ENCODE measurements at regions of chr11 and their contacts with region 1.

Region 1: DNA sequence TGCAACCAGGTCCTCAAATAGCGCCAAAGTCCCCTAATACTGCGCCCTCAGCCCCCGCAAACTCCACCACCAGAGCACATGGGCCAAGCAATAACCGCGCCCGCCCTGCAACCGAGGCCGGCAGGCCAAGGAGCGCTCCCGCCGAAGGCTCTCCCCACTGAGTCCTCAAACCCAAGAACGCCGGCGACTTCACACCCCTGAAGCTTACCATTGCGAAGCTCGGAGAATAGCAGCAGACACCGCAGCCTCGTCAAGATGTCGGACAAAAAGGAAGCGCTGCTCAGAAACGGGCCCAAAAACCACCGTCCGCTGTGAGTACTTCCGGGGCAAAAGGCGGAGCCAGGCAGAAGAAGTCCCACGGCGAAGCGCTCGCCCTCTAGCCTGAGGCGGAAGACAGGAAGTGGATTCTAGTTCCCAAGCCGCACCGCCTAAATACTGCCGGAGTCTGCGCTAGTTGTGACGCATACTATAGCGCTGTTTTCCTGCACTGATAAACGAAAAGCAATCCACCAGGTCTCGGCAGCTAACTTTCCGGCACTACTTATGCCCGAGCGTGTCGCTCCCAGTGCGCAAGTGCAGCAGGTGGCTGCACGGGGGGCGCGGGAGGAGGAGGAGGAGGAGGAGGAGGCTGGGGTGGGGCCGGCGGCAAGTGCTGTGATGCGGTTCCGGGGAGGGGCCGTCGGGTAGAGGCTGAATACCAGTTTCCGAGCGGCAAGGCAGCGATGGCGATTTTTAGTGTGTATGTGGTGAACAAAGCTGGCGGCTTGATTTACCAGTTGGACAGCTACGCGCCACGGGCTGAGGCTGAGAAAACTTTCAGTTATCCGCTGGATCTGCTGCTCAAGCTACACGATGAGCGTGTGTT is at the starts of genes RPS25 and TRAPPC4:
- DNase-seq: peak; percentile 92 to 98 (median 96)
- H3K4me3 ChIP-seq: peak within 1 kb of the TSS; percentile 75 to 92 (median 84)
- H3K27ac ChIP-seq: peak within 1 kb of the TSS; percentile 90 to 97 (median 94)
- H3K4me1 ChIP-seq: peaks cover 25 to 39% of the 10 kb centered on the region in 2 donors
- H3K27me3 ChIP-seq: no peaks in the 10 kb centered on the region
- CTCF ChIP-seq: no peak
- POLR2A ChIP-seq: peak; percentile 51 to 69
- total RNA-seq, gene RPS25: 935 to 1,825 (median 1,024) TPM
- total RNA-seq, gene TRAPPC4: 43.4 to 149 (median 88.0) TPM

Region 2: GRCh38 chr11:119057000-119057769 is 38.9 kb after region 1 on chr11 and contains the start of gene HYOU1:
- intact Hi-C with region 1: loop called in 1 of 2 experiments (anchors 5 kb)
- DNase-seq: peak; percentile 98 to 99 (median 99)
- H3K4me3 ChIP-seq: peak within 1 kb of the TSS; percentile 27 to 86 (median 58)
- H3K27ac ChIP-seq: peak within 1 kb of the TSS; percentile 84 to 97 (median 91)
- H3K4me1 ChIP-seq: peaks cover 6 to 22% of the 10 kb centered on the region in 2 donors
- H3K27me3 ChIP-seq: no peaks in the 10 kb centered on the region
- CTCF ChIP-seq: peak in 4 of 6 experiments; percentile 17 to 42 (median 28)
- POLR2A ChIP-seq: peak; percentile 77 to 88
- total RNA-seq, gene HYOU1: 43.5 to 301 (median 69.4) TPM